Naive thymus-derived CD4-positive, alpha-beta T cell (primary cell): ENCODE measurements at regions of chr13 and their contacts with region 1.

Region 1: GRCh38 chr13:29954082-29955028 is 103.9 kb upstream of the UBL3 start:
- DNase-seq: peak in 8 of 9 donors; percentile 33 to 77 (median 70)
- ATAC-seq: peak; percentile 79
- H3K4me3 ChIP-seq: peak overlapping the region; percentile 43
- H3K4me3 Mint-ChIP-seq: peak overlapping the region; percentile 72 to 90 (median 84)
- H3K27ac ChIP-seq: peak overlapping the region; percentile 69
- H3K27ac Mint-ChIP-seq: peak overlapping the region; percentile 79 to 94 (median 89)
- H3K4me1 ChIP-seq: peaks cover 20 to 30% of the 10 kb centered on the region in 2 donors
- H3K4me1 Mint-ChIP-seq: peaks cover 22 to 81% (median 53%) of the 10 kb centered on the region in 7 donors
- H3K27me3 ChIP-seq: no peaks in the 10 kb centered on the region
- H3K27me3 Mint-ChIP-seq: peaks cover 0 to 15% (median 0%) of the 10 kb centered on the region in 5 donors

Region 2: DNA sequence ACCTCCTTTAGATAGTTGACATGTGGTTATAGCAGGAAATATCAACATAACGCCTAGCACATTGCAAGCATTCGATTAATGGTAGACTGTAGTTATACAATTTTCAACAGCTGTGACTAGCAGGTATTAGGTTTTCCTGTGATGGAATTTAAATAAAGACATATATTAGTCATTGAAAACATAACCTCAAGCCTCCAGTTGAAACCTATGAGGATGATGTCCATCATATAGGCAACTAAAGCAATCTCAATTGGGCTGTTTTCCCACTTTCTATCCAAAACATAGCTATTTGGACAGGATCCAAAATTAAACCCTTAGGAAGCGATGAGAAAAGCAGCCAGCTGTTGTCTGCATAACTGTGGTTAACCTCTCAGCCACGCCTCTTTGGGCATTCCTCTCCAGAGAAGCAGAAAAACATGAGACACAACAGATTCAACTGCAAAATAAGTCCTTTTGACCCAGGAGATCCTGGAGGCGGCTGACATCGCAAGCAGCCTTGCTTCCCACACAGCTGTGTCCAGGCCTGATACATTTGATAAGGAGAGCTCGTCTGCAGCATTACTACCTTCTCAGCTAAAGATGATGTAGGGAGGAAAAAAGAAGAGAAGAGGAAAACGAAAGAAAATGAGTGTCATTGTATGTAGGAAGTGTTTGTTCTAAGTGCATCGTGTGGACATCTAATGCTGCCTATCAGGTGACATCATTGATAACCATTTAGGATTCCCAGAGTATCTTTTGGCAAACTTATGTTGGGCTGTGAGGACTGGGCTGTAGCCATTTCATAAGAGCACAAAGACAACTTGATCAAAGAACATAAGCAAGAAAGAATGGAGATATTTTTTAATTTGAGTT is 52.0 kb before region 1 on chr13:
- CTCF ChIA-PET with region 1: no interaction called
- POLR2A ChIA-PET with region 1: no interaction called
- intact Hi-C with region 1: loop called in 1 of 2 experiments (anchors 1 kb)
- DNase-seq: peak in 8 of 9 donors; percentile 2 to 40 (median 24)
- ATAC-seq: peak; percentile 84
- H3K4me3 ChIP-seq: peak overlapping the region; percentile 46
- H3K4me3 Mint-ChIP-seq: peak overlapping the region; percentile 69 to 95 (median 82)
- H3K27ac ChIP-seq: no peak overlapping the region
- H3K27ac Mint-ChIP-seq: peak overlapping the region; percentile 1 to 94 (median 74)
- H3K4me1 ChIP-seq: peaks cover 13 to 22% of the 10 kb centered on the region in 2 donors
- H3K4me1 Mint-ChIP-seq: peaks cover 8 to 25% (median 22%) of the 10 kb centered on the region in 7 donors
- H3K27me3 ChIP-seq: no peaks in the 10 kb centered on the region
- H3K27me3 Mint-ChIP-seq: peaks cover 0 to 29% (median 0%) of the 10 kb centered on the region in 5 donors

Region 3: DNA sequence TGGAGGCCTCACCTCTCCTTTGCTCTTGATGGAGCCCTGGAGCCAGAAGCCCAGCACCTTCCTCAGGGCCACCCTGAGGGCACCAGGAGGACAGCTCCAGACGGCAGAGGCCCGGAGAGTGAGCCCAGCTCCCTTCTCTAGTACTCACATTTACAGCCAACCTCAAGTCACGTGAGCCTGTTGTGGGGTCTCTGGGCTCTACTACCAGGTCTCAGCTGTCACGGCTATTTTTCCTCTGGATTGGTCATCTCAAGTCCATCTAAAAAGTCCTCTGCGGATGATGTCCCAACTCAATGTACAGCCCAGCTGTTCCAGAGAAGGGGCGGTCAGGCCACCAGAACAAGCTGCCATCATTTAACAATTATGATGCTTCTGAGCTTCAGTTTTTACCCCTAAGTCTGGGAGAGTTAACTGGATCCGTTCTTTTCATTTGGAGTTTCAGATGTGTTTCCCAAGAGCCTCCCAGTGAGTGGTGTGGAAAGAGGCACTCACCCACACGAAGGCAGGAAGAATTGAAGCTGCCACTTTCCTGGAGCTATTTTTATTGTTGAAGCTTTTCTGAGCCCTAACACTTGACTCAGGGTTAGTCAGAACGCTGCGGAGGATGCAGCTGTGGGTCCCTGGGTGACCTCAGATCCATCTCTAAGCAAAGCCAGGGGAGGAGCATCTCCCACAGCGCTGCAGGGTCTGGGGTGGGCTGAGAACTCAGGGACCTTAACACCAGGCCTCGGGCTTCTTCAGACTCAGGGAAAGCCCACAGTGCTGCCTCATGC is 39.5 kb after region 1 on chr13:
- CTCF ChIA-PET with region 1: no interaction called
- POLR2A ChIA-PET with region 1: no interaction called
- intact Hi-C with region 1: no loop called
- DNase-seq: no peak
- ATAC-seq: no peak
- H3K4me3 ChIP-seq: no peak overlapping the region
- H3K4me3 Mint-ChIP-seq: no peak overlapping the region
- H3K27ac ChIP-seq: no peak overlapping the region
- H3K27ac Mint-ChIP-seq: no peak overlapping the region
- H3K4me1 ChIP-seq: no peaks in the 10 kb centered on the region
- H3K4me1 Mint-ChIP-seq: peaks cover 0 to 3% (median 0%) of the 10 kb centered on the region in 7 donors
- H3K27me3 ChIP-seq: no peaks in the 10 kb centered on the region
- H3K27me3 Mint-ChIP-seq: no peaks in the 10 kb centered on the region

Region 4: GRCh38 chr13:30486230-30487074 is 532.1 kb after region 1 on chr13:
- CTCF ChIA-PET with region 1: no interaction called
- POLR2A ChIA-PET with region 1: no interaction called
- intact Hi-C with region 1: no loop called
- DNase-seq: no peak
- ATAC-seq: no peak
- H3K4me3 ChIP-seq: no peak overlapping the region
- H3K4me3 Mint-ChIP-seq: no peak overlapping the region
- H3K27ac ChIP-seq: no peak overlapping the region
- H3K27ac Mint-ChIP-seq: no peak overlapping the region
- H3K4me1 ChIP-seq: no peaks in the 10 kb centered on the region
- H3K4me1 Mint-ChIP-seq: no peaks in the 10 kb centered on the region
- H3K27me3 ChIP-seq: no peaks in the 10 kb centered on the region
- H3K27me3 Mint-ChIP-seq: peaks cover 0 to 31% (median 5%) of the 10 kb centered on the region in 5 donors